Breast epithelium (tissue), 4 donors: ENCODE measurements at regions of chr14 and their contacts with region 1.

Region 1: DNA sequence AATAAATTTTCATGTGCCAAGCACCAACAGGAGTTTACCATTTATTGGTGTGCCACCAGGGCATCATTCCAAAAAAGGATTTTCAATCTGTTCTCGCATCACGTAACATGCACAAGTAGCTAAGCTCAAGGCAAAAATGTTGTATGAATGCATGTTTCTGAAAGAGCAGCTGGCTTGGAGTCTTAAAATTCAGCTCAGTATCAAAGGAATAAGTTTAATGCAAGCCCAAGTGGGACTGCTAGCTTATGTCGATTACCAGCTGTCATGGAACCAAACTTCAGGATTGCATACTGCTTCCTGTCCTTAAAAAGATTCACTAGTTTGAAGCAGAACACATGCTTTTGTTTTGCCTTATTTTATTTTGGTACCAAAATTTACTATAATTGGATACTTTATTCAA is 437.0 kb downstream of the FSCB start:
- DNase-seq: no peak
- H3K4me3 ChIP-seq: no peak overlapping the region
- H3K27ac ChIP-seq: no peak overlapping the region
- H3K4me1 ChIP-seq: no peaks in the 10 kb centered on the region
- H3K27me3 ChIP-seq: no peaks in the 10 kb centered on the region
- CTCF ChIP-seq: no peak
- POLR2A ChIP-seq: no peak

Region 2: GRCh38 chr14:44099743-44100488 is 29.9 kb after region 1 on chr14:
- intact Hi-C with region 1: no loop called
- DNase-seq: no peak
- H3K4me3 ChIP-seq: no peak overlapping the region
- H3K27ac ChIP-seq: no peak overlapping the region
- H3K4me1 ChIP-seq: no peaks in the 10 kb centered on the region
- H3K27me3 ChIP-seq: no peaks in the 10 kb centered on the region
- CTCF ChIP-seq: no peak
- POLR2A ChIP-seq: no peak

Region 3: DNA sequence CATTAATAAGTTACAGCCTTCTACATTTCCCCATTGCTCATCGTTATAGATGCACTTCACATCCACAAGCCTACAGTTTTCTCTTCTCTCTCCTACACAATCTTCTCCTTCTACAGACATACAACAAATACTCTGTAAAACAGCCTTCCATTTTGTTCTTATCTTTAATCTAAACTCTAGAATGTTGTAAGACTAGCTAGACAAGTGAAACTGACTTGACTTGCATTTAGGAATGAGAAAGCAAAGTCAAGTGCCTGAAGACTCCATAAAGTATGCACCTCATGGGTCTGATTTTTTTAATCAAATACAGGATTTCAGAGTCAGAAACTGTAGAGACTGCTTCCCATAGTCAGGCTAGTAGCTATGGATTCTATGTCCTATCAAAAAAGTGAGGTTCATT is 701.4 kb after region 1 on chr14:
- intact Hi-C with region 1: loop called (anchors 5 kb)
- DNase-seq: no peak
- H3K4me3 ChIP-seq: no peak overlapping the region
- H3K27ac ChIP-seq: no peak overlapping the region
- H3K4me1 ChIP-seq: no peaks in the 10 kb centered on the region
- H3K27me3 ChIP-seq: no peaks in the 10 kb centered on the region
- CTCF ChIP-seq: no peak
- POLR2A ChIP-seq: no peak